HepG2 (cell line): ENCODE measurements at regions of chr2 and their contacts with region 1.

Region 1: GRCh38 chr2:62415019-62415431 is 91.0 kb downstream of the TMEM17 start:
- DNase-seq: no peak
- ATAC-seq: no peak
- H3K4me3 ChIP-seq: no peak overlapping the region
- H3K27ac ChIP-seq: no peak overlapping the region
- H3K4me1 ChIP-seq: peaks cover 44% of the 10 kb centered on the region
- H3K27me3 ChIP-seq: no peaks in the 10 kb centered on the region; a peak in 1 of 5 replicates
- CTCF ChIP-seq: no peak
- EP300 ChIP-seq: no peak
- POLR2A ChIP-seq: no peak
- RAD21 ChIP-seq: no peak

Region 2: GRCh38 chr2:61910603-61911002 is 504.4 kb before region 1 on chr2:
- CTCF ChIA-PET with region 1: no interaction called
- POLR2A ChIA-PET with region 1: no interaction called
- in situ Hi-C with region 1: loop called (anchors 5 kb)
- intact Hi-C with region 1: no loop called
- DNase-seq: peak; percentile 24
- ATAC-seq: no peak
- H3K4me3 ChIP-seq: no peak overlapping the region
- H3K27ac ChIP-seq: no peak overlapping the region
- H3K4me1 ChIP-seq: peaks cover 22% of the 10 kb centered on the region
- H3K27me3 ChIP-seq: no peaks in the 10 kb centered on the region
- CTCF ChIP-seq: peak; percentile 40
- EP300 ChIP-seq: no peak
- POLR2A ChIP-seq: no peak
- RAD21 ChIP-seq: no peak

Region 3: GRCh38 chr2:61922714-61923113 is 492.3 kb before region 1 on chr2:
- CTCF ChIA-PET with region 1: interaction called, 30 read pairs
- POLR2A ChIA-PET with region 1: interaction called, 3 read pairs
- in situ Hi-C with region 1: loop called (anchors 5 kb)
- intact Hi-C with region 1: loop called (anchors 1 kb)
- DNase-seq: no peak
- ATAC-seq: no peak
- H3K4me3 ChIP-seq: no peak overlapping the region
- H3K27ac ChIP-seq: no peak overlapping the region
- H3K4me1 ChIP-seq: no peaks in the 10 kb centered on the region
- H3K27me3 ChIP-seq: no peaks in the 10 kb centered on the region
- CTCF ChIP-seq: no peak
- EP300 ChIP-seq: no peak
- POLR2A ChIP-seq: no peak
- RAD21 ChIP-seq: no peak

Region 4: DNA sequence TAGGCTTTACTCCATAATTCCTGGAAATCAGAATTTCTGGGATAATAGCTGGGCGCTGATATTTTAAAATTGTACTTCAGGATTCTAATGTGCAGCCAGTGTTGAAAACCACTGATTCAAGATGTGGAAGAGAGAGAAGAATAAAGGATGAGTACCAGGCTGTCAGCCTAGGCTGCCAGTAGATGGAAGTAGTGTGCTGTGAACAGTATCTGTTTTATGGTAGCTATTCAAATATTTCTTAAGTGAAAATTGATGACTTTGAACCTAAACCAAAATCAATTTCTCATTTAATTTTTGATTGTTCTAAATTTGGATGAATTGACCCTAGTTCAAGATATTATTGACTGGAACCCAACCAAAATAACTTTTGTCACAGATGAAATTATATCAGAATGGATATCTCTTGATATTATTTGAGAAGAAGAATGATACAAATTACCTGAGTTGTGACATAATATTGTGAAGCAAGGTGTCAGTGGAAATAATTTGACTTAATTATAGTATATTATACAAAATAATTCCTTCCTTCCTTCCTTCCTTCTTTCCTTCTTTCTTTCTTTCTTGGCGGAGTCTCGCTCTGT is 421.5 kb before region 1 on chr2:
- CTCF ChIA-PET with region 1: interaction called, 11 read pairs
- POLR2A ChIA-PET with region 1: no interaction called
- in situ Hi-C with region 1: loop called (anchors 5 kb)
- intact Hi-C with region 1: loop called (anchors 1 kb)
- DNase-seq: peak; percentile 52
- ATAC-seq: peak; percentile 75
- H3K4me3 ChIP-seq: no peak overlapping the region
- H3K27ac ChIP-seq: no peak overlapping the region
- H3K4me1 ChIP-seq: no peaks in the 10 kb centered on the region
- H3K27me3 ChIP-seq: no peaks in the 10 kb centered on the region
- CTCF ChIP-seq: peak; percentile 77
- EP300 ChIP-seq: no peak
- POLR2A ChIP-seq: no peak
- RAD21 ChIP-seq: peak; percentile 64

Region 5: GRCh38 chr2:62195421-62196277 is 219.4 kb before region 1 on chr2 and contains the start of gene B3GNT2:
- CTCF ChIA-PET with region 1: no interaction called
- POLR2A ChIA-PET with region 1: no interaction called
- in situ Hi-C with region 1: no loop called
- intact Hi-C with region 1: loop called (anchors 5 kb)
- DNase-seq: peak; percentile 56
- ATAC-seq: peak; percentile 75
- H3K4me3 ChIP-seq: peak within 1 kb of the TSS; percentile 76 to 96 (median 96)
- H3K27ac ChIP-seq: peak within 1 kb of the TSS; percentile 86
- H3K4me1 ChIP-seq: peaks cover 68% of the 10 kb centered on the region
- H3K27me3 ChIP-seq: no peaks in the 10 kb centered on the region; a peak in 1 of 5 replicates
- CTCF ChIP-seq: no peak
- EP300 ChIP-seq: no peak
- POLR2A ChIP-seq: peak; percentile 84 to 95
- RAD21 ChIP-seq: peak; percentile 61
- total RNA-seq, gene B3GNT2: 19.5 and 28.5 TPM in 2 replicates

Region 6: DNA sequence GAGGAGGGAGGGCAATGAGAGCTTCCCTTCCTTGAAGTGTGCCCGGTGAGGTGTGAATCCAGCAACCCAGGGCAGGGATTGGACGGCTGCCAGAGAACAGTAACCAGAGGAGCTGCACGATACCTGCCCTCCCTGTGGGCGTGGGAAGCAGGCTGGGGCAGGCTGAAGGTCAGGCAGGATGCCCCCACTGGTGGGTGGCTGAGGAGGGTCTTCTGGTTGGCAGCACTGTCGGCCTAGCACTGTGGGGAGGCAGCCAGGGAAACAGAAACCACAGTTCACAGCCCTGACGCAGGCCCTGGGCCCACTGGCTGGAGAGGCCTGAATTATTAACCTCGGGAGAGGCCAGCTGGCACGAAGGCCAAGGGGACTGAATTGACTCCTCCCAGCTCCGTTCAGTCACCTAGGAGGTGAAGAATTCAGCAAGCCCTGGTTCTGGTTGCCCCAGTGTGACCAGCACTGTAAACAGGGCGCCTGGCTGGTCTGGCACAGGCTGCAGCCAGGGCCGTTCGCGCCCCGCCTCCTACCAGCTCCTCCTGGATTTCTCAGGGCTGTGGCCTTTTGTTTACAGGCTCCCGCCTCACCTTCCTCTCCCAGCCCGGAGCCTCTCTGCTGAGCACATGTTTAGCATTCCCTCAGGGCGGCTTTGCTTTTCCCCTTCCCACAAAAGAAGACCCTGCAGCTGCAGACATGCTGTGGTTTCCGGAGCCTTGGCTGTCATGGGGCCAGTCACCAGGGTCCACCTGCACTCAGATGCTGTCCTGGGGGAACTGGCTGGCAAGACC is 121.3 kb before region 1 on chr2:
- CTCF ChIA-PET with region 1: no interaction called
- POLR2A ChIA-PET with region 1: interaction called, 3 read pairs
- in situ Hi-C with region 1: no loop called
- intact Hi-C with region 1: loop called (anchors 5 kb)
- DNase-seq: peak; percentile 51
- ATAC-seq: peak; percentile 87
- H3K4me3 ChIP-seq: peak overlapping the region; percentile 50 to 78 (median 59)
- H3K27ac ChIP-seq: no peak overlapping the region
- H3K4me1 ChIP-seq: peaks cover 29% of the 10 kb centered on the region
- H3K27me3 ChIP-seq: no peaks in the 10 kb centered on the region; a peak in 1 of 5 replicates
- CTCF ChIP-seq: peak; percentile 6; the same call in 1 of the 2 replicates
- EP300 ChIP-seq: no peak
- POLR2A ChIP-seq: 0 out of 4 replicates have a peak, but pooled peaks of 1 of the 2 experiments have one; percentile 16
- RAD21 ChIP-seq: 0 out of 2 replicates have a peak, but pooled peaks have one; percentile 21

Region 7: GRCh38 chr2:63050334-63051041 is 635.5 kb after region 1 on chr2 and contains the start of gene OTX1:
- CTCF ChIA-PET with region 1: no interaction called
- POLR2A ChIA-PET with region 1: no interaction called
- in situ Hi-C with region 1: loop called (anchors 25 kb)
- intact Hi-C with region 1: no loop called
- DNase-seq: peak; percentile 82
- ATAC-seq: peak; percentile 87
- H3K4me3 ChIP-seq: peak within 1 kb of the TSS; percentile 80 to 99 (median 98)
- H3K27ac ChIP-seq: peak within 1 kb of the TSS; percentile 90
- H3K4me1 ChIP-seq: peaks cover 30% of the 10 kb centered on the region
- H3K27me3 ChIP-seq: no peaks in the 10 kb centered on the region; a peak in 1 of 5 replicates
- CTCF ChIP-seq: peak; percentile 18; the same call in 1 of the 2 replicates
- EP300 ChIP-seq: no peak
- POLR2A ChIP-seq: peak; percentile 75 to 87
- RAD21 ChIP-seq: peak; percentile 77
- total RNA-seq, gene OTX1: 3.0 and 5.0 TPM in 2 replicates